GM18951 (cell line): ENCODE measurements at regions of chr16 and their contacts with region 1.

Region 1: GRCh38 chr16:78099372-78100161 is at the start of gene WWOX:
- POLR2A ChIP-seq: peak; percentile 59

Region 2: GRCh38 chr16:78770353-78771091 is 671.0 kb after region 1 on chr16:
- in situ Hi-C with region 1: loop called (anchors 25 kb)
- POLR2A ChIP-seq: no peak